ENCODE measurements at regions of chr5 and their contacts with region 1.

Region 1: GRCh38 chr5:134145779-134146581 is 30.8 kb downstream of the SKP1 start:
- DNase-seq: peak; percentile 78 to 80
- H3K4me3 ChIP-seq: no peak overlapping the region
- H3K27ac ChIP-seq: no peak overlapping the region
- H3K4me1 ChIP-seq: peaks cover 0 to 47% (median 0%) of the 10 kb centered on the region in 4 donors
- H3K27me3 ChIP-seq: no peaks in the 10 kb centered on the region
- CTCF ChIP-seq: peak; percentile 91 to 92

Region 2: GRCh38 chr5:134041570-134042411 is 104.2 kb before region 1 on chr5:
- intact Hi-C with region 1: loop called (anchors 2 kb)
- DNase-seq: no peak
- H3K4me3 ChIP-seq: no peak overlapping the region
- H3K27ac ChIP-seq: no peak overlapping the region
- H3K4me1 ChIP-seq: no peaks in the 10 kb centered on the region
- H3K27me3 ChIP-seq: no peaks in the 10 kb centered on the region
- CTCF ChIP-seq: no peak

Region 3: DNA sequence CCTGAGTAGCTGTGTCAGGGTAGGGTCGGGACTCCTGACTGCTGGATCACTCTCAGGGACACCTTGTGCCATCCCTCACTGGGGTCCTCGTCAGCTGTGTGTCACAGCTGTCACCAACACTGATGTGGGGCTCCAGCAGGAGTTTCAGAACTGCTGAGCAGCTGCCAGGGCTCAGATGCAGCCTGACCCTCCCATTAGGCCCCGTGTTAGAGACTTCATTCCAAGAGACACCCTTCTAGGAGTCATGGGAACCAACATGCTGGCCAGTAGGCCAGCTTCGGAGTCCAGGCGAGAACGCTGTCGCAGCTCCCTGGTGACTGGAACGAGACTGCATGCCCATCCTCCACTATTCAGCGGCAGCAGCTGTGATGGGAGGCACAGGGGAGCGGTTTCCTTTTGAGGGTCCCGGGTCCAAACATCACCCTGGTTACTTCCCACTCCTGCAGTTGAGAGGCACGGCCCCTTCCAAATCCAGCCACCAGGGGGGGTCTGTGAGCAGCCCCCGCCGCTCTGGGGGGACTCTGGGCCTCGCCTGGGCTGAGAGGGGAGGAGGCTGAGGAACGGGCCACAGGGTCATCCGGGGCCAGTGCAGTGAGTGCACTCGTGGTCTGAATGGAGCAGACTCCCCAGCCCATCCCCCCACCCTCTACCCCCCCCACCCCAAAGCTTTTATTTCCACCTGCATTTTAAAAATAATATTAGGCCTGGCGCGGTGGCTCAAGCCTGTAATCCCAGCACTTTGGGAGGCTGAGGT is 44.1 kb before region 1 on chr5:
- intact Hi-C with region 1: loop called (anchors 5 kb)
- DNase-seq: no peak
- H3K4me3 ChIP-seq: no peak overlapping the region
- H3K27ac ChIP-seq: peak overlapping the region in 1 of 2 donors; percentile 6
- H3K4me1 ChIP-seq: peaks cover 0 to 29% (median 20%) of the 10 kb centered on the region in 4 donors
- H3K27me3 ChIP-seq: no peaks in the 10 kb centered on the region
- CTCF ChIP-seq: peak; percentile 65 to 85

Measured in tibial artery (tissue), 4 donors.